PC-9 (cell line): ENCODE measurements at regions of chr1 and their contacts with region 1.

Region 1: DNA sequence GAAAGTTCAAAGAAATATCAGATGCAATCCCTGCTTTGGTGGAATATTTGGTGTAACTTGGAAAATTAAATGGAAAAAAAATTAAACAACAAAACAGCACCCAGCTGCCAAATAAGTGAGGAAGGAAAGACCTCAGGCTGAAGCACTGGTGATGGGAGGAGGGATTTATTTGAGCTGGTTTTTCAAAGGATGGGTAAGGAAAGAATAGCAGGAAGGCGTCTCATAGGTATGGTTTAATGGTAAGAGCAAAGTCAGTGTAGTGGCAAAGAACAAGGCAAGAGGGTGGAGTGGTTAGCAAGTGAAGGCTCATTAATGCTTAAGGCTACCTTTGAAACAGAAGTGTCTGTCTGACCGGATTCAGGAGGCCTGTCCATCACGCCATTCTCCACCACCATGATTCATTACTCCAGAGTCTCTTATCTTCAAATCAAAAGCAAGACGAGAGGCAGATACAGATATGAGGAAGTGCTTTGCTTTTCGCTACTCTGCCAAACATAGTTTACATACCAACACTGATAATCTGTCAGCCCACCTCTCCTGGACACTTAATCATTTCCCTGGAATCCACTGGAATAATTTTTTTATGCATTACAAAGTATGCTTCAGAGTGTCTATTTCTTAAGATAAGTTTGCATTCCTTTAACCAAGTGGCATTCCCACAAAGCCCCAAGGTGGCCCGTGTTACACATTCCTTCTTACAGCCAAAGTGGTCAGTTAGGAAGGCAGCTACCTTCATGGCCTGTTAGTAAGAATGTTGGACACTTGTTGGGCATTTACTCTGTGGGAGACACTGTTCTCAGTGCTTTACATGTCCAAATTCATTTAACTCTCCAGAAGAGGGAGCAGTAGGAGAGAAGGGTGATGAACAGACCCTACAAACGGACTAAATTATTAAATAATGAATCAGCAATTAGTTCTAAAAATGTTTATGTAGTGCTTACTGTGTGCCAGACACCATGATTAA is 146.6 kb downstream of the ROR1 start:
- DNase-seq: peak; percentile 83 to 100
- H3K4me3 ChIP-seq: no peak overlapping the region; the same call in 1 of the 2 replicates
- H3K27ac ChIP-seq: peak overlapping the region; percentile 97
- H3K4me1 ChIP-seq: peaks cover 69% of the 10 kb centered on the region
- H3K27me3 ChIP-seq: no peaks in the 10 kb centered on the region
- CTCF ChIP-seq: peak; percentile 67

Region 2: DNA sequence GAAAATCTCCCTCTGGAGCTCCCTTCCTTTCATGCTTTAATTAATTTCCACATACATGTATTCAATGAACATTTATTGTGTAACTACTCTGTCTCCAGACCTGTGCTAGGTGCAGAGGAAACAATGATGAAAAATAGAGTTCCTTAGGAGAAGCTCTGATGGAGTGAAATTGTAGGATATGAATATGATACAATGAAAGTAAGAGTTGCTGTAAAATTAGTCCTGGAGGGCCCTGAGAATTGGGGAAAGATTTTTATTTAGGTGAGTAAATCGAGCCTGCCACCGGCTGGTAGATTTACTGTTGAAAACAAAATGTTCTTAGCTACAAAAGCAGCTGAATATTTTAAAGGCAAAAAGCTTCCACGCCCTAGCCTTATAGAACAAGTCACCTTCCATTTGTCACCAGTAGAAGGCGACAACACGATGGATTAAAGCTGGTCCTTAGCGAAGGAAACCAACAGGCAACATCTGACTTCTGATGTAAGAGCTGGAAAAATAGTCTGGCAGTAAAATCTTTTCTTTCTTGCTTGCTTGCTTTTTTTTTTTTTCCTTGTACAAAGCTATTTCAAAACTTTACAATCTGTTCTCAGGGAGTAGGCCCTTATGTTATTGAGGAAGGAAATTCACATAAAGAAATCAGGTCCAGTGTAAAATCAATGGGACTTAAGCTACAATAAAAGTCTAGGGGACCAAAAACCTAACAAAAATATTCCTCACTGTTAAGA is 228.6 kb before region 1 on chr1:
- CTCF ChIA-PET with region 1: interaction called, 10 read pairs
- POLR2A ChIA-PET with region 1: no interaction called
- intact Hi-C with region 1: loop called (anchors 1 kb)
- DNase-seq: peak; percentile 62 to 86
- H3K4me3 ChIP-seq: no peak overlapping the region
- H3K27ac ChIP-seq: peak overlapping the region; percentile 61
- H3K4me1 ChIP-seq: peaks cover 11% of the 10 kb centered on the region
- H3K27me3 ChIP-seq: no peaks in the 10 kb centered on the region
- CTCF ChIP-seq: peak; percentile 88

Region 3: DNA sequence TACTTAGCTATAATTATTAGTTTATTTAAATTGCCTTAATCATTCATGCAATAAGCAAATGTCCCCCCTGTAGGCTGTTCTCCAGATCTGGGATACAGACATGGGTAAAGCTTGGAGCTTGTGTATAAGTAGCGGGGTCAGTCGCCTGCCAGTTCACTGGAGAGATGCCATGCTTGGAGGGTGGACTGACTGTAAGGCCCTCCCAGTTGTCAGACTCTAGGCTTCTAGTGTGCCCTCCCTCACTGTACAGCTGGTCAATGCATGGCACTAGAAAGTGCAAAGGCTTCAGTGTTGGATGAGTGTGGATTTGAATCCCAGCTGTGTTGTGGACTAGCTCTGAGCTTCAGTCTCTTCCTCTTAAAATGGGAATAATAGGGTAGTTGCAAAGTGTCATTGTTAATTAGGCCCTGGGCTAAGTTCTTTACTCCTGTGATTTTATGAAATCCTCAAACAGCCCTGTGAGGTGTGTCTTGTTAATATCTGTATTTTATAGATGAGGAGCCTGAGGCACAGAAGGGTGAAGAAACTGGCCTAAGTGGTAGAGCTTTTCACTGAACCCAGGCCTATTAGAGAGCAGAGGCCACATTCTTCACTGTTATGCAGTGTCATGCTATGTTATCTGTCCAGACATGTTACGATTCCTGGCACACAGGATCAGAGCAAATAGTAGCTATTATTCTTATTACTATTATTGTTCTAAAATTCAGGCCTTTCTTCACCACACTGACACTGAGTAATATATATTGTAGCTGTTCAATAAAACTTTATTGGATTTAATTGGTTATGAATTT is 60.8 kb before region 1 on chr1:
- CTCF ChIA-PET with region 1: no interaction called
- POLR2A ChIA-PET with region 1: interaction called, 10 read pairs
- intact Hi-C with region 1: no loop called
- DNase-seq: no peak
- H3K4me3 ChIP-seq: no peak overlapping the region
- H3K27ac ChIP-seq: no peak overlapping the region
- H3K4me1 ChIP-seq: peaks cover 9% of the 10 kb centered on the region; the same call in 1 of the 2 replicates
- H3K27me3 ChIP-seq: no peaks in the 10 kb centered on the region
- CTCF ChIP-seq: no peak

Region 4: GRCh38 chr1:63892632-63893395 is 27.6 kb before region 1 on chr1:
- CTCF ChIA-PET with region 1: interaction called, 3 read pairs
- POLR2A ChIA-PET with region 1: interaction called, 3 read pairs
- intact Hi-C with region 1: loop called (anchors 1 kb)
- DNase-seq: peak; percentile 73 to 83
- H3K4me3 ChIP-seq: no peak overlapping the region
- H3K27ac ChIP-seq: peak overlapping the region; percentile 77
- H3K4me1 ChIP-seq: peaks cover 27% of the 10 kb centered on the region
- H3K27me3 ChIP-seq: no peaks in the 10 kb centered on the region
- CTCF ChIP-seq: no peak

Region 5: DNA sequence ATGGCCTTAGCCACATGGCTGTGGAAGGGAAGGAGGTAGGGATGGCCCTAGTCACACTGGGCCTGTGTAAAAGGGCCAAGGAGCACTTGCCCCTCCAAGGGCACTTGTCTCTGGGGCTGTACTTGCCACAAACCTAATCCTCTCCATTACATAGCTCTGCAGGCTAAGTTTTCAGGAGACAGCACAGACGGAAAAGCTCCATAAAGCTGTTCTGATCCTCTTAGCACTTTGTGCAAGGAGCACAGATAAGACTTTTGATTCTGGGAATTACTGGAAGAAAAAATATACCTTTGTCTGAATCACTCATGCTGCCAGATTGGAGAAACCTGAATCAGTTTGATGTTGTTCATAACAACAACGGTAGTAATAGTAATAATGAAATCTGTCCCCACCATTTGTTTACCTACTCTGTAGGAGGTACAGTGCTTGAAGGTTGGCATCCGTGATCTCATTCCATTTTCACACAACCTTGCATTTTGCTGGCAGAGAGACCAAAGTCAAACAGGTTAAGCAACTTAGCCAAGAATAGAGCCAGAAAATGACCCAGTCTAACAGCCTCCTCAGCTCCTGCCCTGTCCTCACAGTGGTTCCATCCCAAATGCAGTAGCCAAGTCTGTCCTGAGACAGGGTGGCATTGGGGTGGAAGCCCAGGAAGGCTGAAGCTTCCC is 60.4 kb after region 1 on chr1:
- CTCF ChIA-PET with region 1: no interaction called
- POLR2A ChIA-PET with region 1: no interaction called
- intact Hi-C with region 1: loop called (anchors 1 kb)
- DNase-seq: peak; percentile 74 to 95
- H3K4me3 ChIP-seq: peak overlapping the region; percentile 4; the same call in 1 of the 2 replicates
- H3K27ac ChIP-seq: peak overlapping the region; percentile 81
- H3K4me1 ChIP-seq: peaks cover 40% of the 10 kb centered on the region
- H3K27me3 ChIP-seq: no peaks in the 10 kb centered on the region
- CTCF ChIP-seq: no peak

Region 6: DNA sequence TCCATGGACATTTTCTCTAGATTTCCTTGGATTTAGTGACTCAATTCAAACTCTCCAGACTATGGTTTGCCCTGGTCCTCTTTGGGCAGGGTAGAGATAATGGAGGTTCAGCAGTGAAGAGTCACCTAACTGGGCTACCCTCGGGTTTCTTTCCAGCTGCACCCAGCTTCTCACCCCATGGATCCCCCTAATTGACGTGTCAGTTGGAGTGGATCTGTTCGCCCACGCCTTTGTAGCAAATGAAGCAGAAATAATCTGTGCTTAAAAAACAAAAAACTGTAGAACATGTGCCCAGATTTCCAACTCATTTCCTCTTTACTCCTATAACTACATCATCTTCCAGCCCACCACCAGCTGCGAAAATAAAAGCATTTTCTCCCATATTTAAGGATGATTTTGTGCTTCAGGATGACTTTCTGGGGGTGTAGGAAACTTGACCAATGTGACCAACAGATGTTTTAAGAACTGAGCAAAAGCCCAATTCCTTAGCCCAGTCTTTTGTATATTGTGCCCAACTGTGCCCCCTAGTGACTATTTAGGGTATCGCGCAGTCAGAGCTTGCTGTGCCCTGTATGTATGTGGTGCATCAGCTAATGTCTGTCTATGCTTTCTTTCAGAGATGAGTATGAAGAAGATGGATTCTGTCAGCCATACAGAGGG is 216.4 kb after region 1 on chr1:
- CTCF ChIA-PET with region 1: interaction called, 14 read pairs
- POLR2A ChIA-PET with region 1: interaction called, 3 read pairs
- intact Hi-C with region 1: loop called (anchors 1 kb)
- DNase-seq: peak; percentile 51 to 75
- H3K4me3 ChIP-seq: no peak overlapping the region
- H3K27ac ChIP-seq: no peak overlapping the region
- H3K4me1 ChIP-seq: peaks cover 38% of the 10 kb centered on the region
- H3K27me3 ChIP-seq: no peaks in the 10 kb centered on the region
- CTCF ChIP-seq: peak; percentile 92

Region 7: DNA sequence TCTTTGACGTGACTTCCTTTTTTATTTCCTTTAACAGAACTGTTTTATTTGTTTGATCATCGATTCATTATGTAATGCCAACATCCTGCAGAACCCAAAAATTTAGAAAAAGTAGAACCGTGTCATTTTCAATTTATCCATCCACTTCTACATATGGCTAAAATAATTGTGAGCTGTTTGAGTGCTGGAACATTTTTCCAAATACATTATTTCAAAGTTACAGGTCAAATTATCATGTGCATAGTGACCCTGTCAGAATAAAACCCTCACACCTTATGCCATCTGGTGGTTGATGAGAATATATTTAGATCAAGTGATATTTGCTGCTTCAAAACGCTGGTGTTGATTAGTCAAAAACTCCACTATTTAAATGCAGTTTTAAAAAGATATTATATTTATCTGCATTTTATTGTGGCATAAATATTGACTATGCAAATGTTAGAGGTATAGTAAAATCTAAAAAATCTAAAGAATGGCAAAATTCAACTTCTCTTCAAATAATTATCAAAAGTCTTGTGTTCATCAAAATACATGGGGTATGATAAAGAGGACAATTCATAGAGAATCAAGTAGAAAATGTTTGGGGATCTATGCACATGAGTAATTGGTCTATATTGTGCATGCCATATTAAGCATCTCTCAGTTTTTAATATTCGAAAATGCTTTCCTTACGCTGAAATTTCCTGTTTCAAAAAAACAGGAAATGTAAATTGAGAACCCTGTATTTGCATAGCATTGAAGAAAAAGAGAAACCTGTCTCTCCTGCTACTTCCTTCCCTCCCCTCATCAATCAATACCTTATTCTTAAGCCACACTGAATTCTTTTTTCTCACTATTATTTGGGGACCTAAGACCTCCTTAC is 322.7 kb after region 1 on chr1:
- CTCF ChIA-PET with region 1: no interaction called
- POLR2A ChIA-PET with region 1: interaction called, 3 read pairs
- intact Hi-C with region 1: loop called (anchors 1 kb)
- DNase-seq: no peak
- H3K4me3 ChIP-seq: no peak overlapping the region
- H3K27ac ChIP-seq: no peak overlapping the region
- H3K4me1 ChIP-seq: peaks cover 15% of the 10 kb centered on the region
- H3K27me3 ChIP-seq: no peaks in the 10 kb centered on the region
- CTCF ChIP-seq: peak; percentile 85